Natural killer cell (primary cell): ENCODE measurements at regions of chr14 and their contacts with region 1.

Region 1: GRCh38 chr14:22472935-22473854 is 115.8 kb downstream of the DAD1 start:
- DNase-seq: peak; percentile 56 to 57
- ATAC-seq: peak; percentile 72 to 87 (median 78)
- H3K4me3 ChIP-seq: no peak overlapping the region
- H3K4me3 Mint-ChIP-seq: peak overlapping the region; percentile 91
- H3K27ac ChIP-seq: peak overlapping the region; percentile 74
- H3K27ac Mint-ChIP-seq: peak overlapping the region; percentile 80 to 89
- H3K4me1 ChIP-seq: peaks cover 91% of the 10 kb centered on the region
- H3K4me1 Mint-ChIP-seq: peaks cover 91 to 95% of the 10 kb centered on the region in 2 donors
- H3K27me3 ChIP-seq: no peaks in the 10 kb centered on the region
- H3K27me3 Mint-ChIP-seq: no peaks in the 10 kb centered on the region
- CTCF ChIP-seq: peak; percentile 73

Region 2: GRCh38 chr14:22386924-22387775 is 86.0 kb before region 1 on chr14:
- intact Hi-C with region 1: loop called (anchors 1 kb)
- DNase-seq: peak; percentile 58 to 64
- ATAC-seq: peak; percentile 59 to 69 (median 63)
- H3K4me3 ChIP-seq: no peak overlapping the region
- H3K4me3 Mint-ChIP-seq: no peak overlapping the region
- H3K27ac ChIP-seq: no peak overlapping the region
- H3K27ac Mint-ChIP-seq: peak overlapping the region; percentile 73 to 77
- H3K4me1 ChIP-seq: peaks cover 33% of the 10 kb centered on the region
- H3K4me1 Mint-ChIP-seq: peaks cover 36% of the 10 kb centered on the region in 2 donors
- H3K27me3 ChIP-seq: no peaks in the 10 kb centered on the region
- H3K27me3 Mint-ChIP-seq: no peaks in the 10 kb centered on the region
- CTCF ChIP-seq: peak; percentile 89

Region 3: GRCh38 chr14:22432348-22432976 is 40.7 kb before region 1 on chr14:
- intact Hi-C with region 1: loop called (anchors 2 kb)
- DNase-seq: no peak
- ATAC-seq: no peak
- H3K4me3 ChIP-seq: no peak overlapping the region
- H3K4me3 Mint-ChIP-seq: peak overlapping the region; percentile 62
- H3K27ac ChIP-seq: no peak overlapping the region
- H3K27ac Mint-ChIP-seq: peak overlapping the region; percentile 89 to 93
- H3K4me1 ChIP-seq: peaks cover 58% of the 10 kb centered on the region
- H3K4me1 Mint-ChIP-seq: peaks cover 69 to 79% of the 10 kb centered on the region in 2 donors
- H3K27me3 ChIP-seq: no peaks in the 10 kb centered on the region
- H3K27me3 Mint-ChIP-seq: no peaks in the 10 kb centered on the region
- CTCF ChIP-seq: no peak

Region 4: GRCh38 chr14:22491683-22492621 is 18.8 kb after region 1 on chr14:
- intact Hi-C with region 1: loop called (anchors 2 kb)
- DNase-seq: peak; percentile 47 to 79
- ATAC-seq: peak; percentile 78 to 95 (median 82)
- H3K4me3 ChIP-seq: peak overlapping the region; percentile 2
- H3K4me3 Mint-ChIP-seq: peak overlapping the region; percentile 76
- H3K27ac ChIP-seq: peak overlapping the region; percentile 85
- H3K27ac Mint-ChIP-seq: peak overlapping the region; percentile 80 to 89
- H3K4me1 ChIP-seq: peaks cover 66% of the 10 kb centered on the region
- H3K4me1 Mint-ChIP-seq: peaks cover 82 to 83% of the 10 kb centered on the region in 2 donors
- H3K27me3 ChIP-seq: no peaks in the 10 kb centered on the region
- H3K27me3 Mint-ChIP-seq: no peaks in the 10 kb centered on the region
- CTCF ChIP-seq: no peak